ENCODE measurements at regions of chr21 and their contacts with region 1.

Region 1: GRCh38 chr21:35882791-35883240 is 177.5 kb downstream of the SETD4 start:
- DNase-seq: no peak
- H3K4me3 ChIP-seq: no peak overlapping the region
- H3K4me3 Mint-ChIP-seq: no peak overlapping the region
- H3K27ac ChIP-seq: no peak overlapping the region
- H3K27ac Mint-ChIP-seq: no peak overlapping the region
- H3K4me1 ChIP-seq: no peaks in the 10 kb centered on the region
- H3K4me1 Mint-ChIP-seq: peaks cover 4% of the 10 kb centered on the region
- H3K27me3 ChIP-seq: no peaks in the 10 kb centered on the region
- H3K27me3 Mint-ChIP-seq: peaks cover 2 to 9% (median 3%) of the 10 kb centered on the region in 3 donors
- CTCF ChIP-seq: no peak

Region 2: DNA sequence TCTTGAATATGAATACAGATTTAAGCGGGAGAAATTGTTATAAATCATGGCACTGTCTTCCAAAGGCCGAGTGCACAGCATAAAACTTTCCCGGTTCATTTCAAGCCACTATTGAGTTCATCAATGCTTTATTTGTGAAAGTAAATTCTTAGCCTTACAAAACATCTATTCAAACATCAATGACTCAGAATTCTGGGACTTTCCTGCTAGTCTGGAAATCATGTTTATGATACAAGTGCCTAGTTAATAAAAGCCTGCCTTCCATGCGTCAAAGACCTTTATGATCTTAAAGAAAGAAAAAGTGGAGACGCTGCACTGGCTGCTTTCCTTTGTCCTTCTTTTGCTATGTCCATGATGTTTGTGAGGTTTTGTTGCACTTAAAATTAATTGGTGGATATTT is 39.8 kb after region 1 on chr21:
- intact Hi-C with region 1: loop called in 1 of 2 experiments (anchors 2 kb)
- DNase-seq: no peak
- H3K4me3 ChIP-seq: no peak overlapping the region
- H3K4me3 Mint-ChIP-seq: no peak overlapping the region
- H3K27ac ChIP-seq: no peak overlapping the region
- H3K27ac Mint-ChIP-seq: no peak overlapping the region
- H3K4me1 ChIP-seq: peaks cover 8 to 13% of the 10 kb centered on the region in 2 donors
- H3K4me1 Mint-ChIP-seq: peaks cover 14% of the 10 kb centered on the region
- H3K27me3 ChIP-seq: no peaks in the 10 kb centered on the region
- H3K27me3 Mint-ChIP-seq: peaks cover 0 to 5% (median 2%) of the 10 kb centered on the region in 3 donors
- CTCF ChIP-seq: no peak

Region 3: GRCh38 chr21:35933466-35933865 is 50.6 kb after region 1 on chr21:
- intact Hi-C with region 1: no loop called
- DNase-seq: peak; percentile 89 to 95 (median 94)
- H3K4me3 ChIP-seq: peak overlapping the region in 1 of 3 experiments; percentile 5
- H3K4me3 Mint-ChIP-seq: no peak overlapping the region
- H3K27ac ChIP-seq: peak overlapping the region; percentile 11 to 85
- H3K27ac Mint-ChIP-seq: no peak overlapping the region
- H3K4me1 ChIP-seq: peaks cover 27 to 32% of the 10 kb centered on the region in 2 donors
- H3K4me1 Mint-ChIP-seq: no peaks in the 10 kb centered on the region
- H3K27me3 ChIP-seq: no peaks in the 10 kb centered on the region
- H3K27me3 Mint-ChIP-seq: no peaks in the 10 kb centered on the region
- CTCF ChIP-seq: peak; percentile 53

Region 4: DNA sequence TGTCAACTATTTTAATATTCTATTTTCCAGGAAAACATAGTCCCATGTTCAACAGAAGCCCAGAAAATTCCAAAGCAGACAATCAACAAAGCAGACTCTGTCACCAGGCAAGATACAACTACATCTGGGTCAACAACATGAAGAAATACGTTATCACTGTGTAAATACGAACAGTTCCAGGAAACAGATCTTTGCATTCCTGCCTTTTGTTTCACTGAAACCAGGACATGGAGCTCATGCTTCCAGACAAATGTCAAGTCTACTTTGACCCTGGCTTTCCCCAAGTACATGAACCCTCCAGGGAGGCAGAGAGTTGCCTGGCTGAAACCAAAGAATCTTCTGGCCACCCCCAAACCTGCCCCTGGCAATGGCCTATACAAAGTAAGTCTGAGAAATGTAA is 70.8 kb after region 1 on chr21:
- intact Hi-C with region 1: no loop called
- DNase-seq: no peak
- H3K4me3 ChIP-seq: no peak overlapping the region
- H3K4me3 Mint-ChIP-seq: no peak overlapping the region
- H3K27ac ChIP-seq: no peak overlapping the region
- H3K27ac Mint-ChIP-seq: no peak overlapping the region
- H3K4me1 ChIP-seq: no peaks in the 10 kb centered on the region
- H3K4me1 Mint-ChIP-seq: no peaks in the 10 kb centered on the region
- H3K27me3 ChIP-seq: no peaks in the 10 kb centered on the region
- H3K27me3 Mint-ChIP-seq: peaks cover 2 to 6% (median 5%) of the 10 kb centered on the region in 3 donors
- CTCF ChIP-seq: no peak

Region 5: GRCh38 chr21:36125512-36126222 is 242.9 kb after region 1 on chr21:
- intact Hi-C with region 1: no loop called
- DNase-seq: peak; percentile 30 to 51 (median 46)
- H3K4me3 ChIP-seq: no peak overlapping the region
- H3K4me3 Mint-ChIP-seq: no peak overlapping the region
- H3K27ac ChIP-seq: no peak overlapping the region
- H3K27ac Mint-ChIP-seq: peak overlapping the region in 1 of 7 donors; percentile 11
- H3K4me1 ChIP-seq: peaks cover 8 to 10% of the 10 kb centered on the region in 2 donors
- H3K4me1 Mint-ChIP-seq: peaks cover 12% of the 10 kb centered on the region
- H3K27me3 ChIP-seq: no peaks in the 10 kb centered on the region
- H3K27me3 Mint-ChIP-seq: peaks cover 4 to 9% (median 8%) of the 10 kb centered on the region in 3 donors
- CTCF ChIP-seq: peak; percentile 84

Measured in CD14-positive monocyte (primary cell).